CD4-positive, alpha-beta memory T cell (primary cell): ENCODE measurements at regions of chr2 and their contacts with region 1.

Region 1: GRCh38 chr2:171574149-171574795 is 52.0 kb downstream of the CYBRD1 start:
- DNase-seq: peak; percentile 65 to 79 (median 75)
- H3K4me3 ChIP-seq: no peak overlapping the region
- H3K4me3 Mint-ChIP-seq: peak overlapping the region in 6 of 8 donors; percentile 17 to 51 (median 30)
- H3K27ac ChIP-seq: no peak overlapping the region
- H3K27ac Mint-ChIP-seq: peak overlapping the region in 4 of 7 donors; percentile 10 to 60 (median 40)
- H3K4me1 ChIP-seq: no peaks in the 10 kb centered on the region
- H3K4me1 Mint-ChIP-seq: peaks cover 2 to 7% (median 7%) of the 10 kb centered on the region in 4 donors
- H3K27me3 ChIP-seq: no peaks in the 10 kb centered on the region
- H3K27me3 Mint-ChIP-seq: no peaks in the 10 kb centered on the region

Region 2: GRCh38 chr2:171712051-171712450 is 137.8 kb after region 1 on chr2:
- CTCF ChIA-PET with region 1: no interaction called
- POLR2A ChIA-PET with region 1: no interaction called
- intact Hi-C with region 1: no loop called
- DNase-seq: no peak
- H3K4me3 ChIP-seq: no peak overlapping the region
- H3K4me3 Mint-ChIP-seq: no peak overlapping the region
- H3K27ac ChIP-seq: no peak overlapping the region
- H3K27ac Mint-ChIP-seq: no peak overlapping the region
- H3K4me1 ChIP-seq: no peaks in the 10 kb centered on the region
- H3K4me1 Mint-ChIP-seq: peaks cover 0 to 3% (median 0%) of the 10 kb centered on the region in 4 donors
- H3K27me3 ChIP-seq: no peaks in the 10 kb centered on the region
- H3K27me3 Mint-ChIP-seq: no peaks in the 10 kb centered on the region

Region 3: GRCh38 chr2:172710584-172711024 is 1136.3 kb after region 1 on chr2:
- CTCF ChIA-PET with region 1: interaction called, 4 read pairs
- POLR2A ChIA-PET with region 1: no interaction called
- intact Hi-C with region 1: loop called (anchors 1 kb)
- DNase-seq: peak in 4 of 5 donors; percentile 11 to 31 (median 22)
- H3K4me3 ChIP-seq: no peak overlapping the region
- H3K4me3 Mint-ChIP-seq: no peak overlapping the region
- H3K27ac ChIP-seq: no peak overlapping the region
- H3K27ac Mint-ChIP-seq: no peak overlapping the region
- H3K4me1 ChIP-seq: no peaks in the 10 kb centered on the region
- H3K4me1 Mint-ChIP-seq: no peaks in the 10 kb centered on the region
- H3K27me3 ChIP-seq: no peaks in the 10 kb centered on the region
- H3K27me3 Mint-ChIP-seq: peaks cover 11 to 19% of the 10 kb centered on the region in 2 donors